AG04450 (cell line): ENCODE measurements at regions of chr4 and their contacts with region 1.

Region 1: DNA sequence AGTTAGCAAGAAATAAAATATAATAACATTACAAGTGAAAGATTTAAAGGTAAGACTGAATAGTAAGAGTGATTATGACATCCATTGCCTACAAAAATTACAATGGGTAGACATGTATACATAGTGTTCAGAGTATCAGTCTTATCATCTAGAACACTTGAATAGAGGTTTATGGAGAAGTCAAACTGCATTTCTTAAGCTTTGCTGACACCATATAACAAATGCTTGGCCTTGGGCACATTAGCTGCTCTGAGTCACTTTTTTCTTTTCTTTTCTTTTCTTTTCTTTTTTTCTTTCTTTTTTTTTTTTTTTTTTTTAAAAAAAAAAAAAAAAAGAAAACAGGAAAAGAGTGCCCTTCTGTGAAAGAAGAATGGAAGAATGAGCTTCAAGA is 220.0 kb downstream of the SPCS3 start:
- DNase-seq: no peak
- H3K4me3 ChIP-seq: no peak overlapping the region
- H3K27ac ChIP-seq: no peak overlapping the region
- H3K27me3 ChIP-seq: no peaks in the 10 kb centered on the region
- CTCF ChIP-seq: no peak

Region 2: DNA sequence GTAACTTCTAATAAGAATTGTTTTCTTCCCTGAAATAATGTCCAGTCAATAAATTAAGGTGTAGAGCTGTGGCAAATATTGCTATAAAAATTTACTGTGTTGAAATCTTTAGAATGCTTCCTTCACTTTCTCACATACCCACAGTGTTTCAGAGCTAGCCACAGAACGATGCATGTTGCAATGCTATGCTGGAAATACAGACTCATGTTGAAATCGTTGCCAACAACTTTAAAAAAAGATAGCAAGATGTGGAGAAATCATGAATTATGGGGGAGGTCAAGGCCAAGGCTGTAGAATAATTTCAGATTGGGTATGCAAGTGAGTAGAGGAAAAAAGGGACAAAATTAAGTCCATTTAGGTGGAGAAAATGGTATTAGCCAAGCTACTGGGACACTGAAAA is 48.1 kb after region 1 on chr4:
- CTCF ChIA-PET with region 1: no interaction called
- POLR2A ChIA-PET with region 1: interaction called, 14 read pairs
- DNase-seq: peak; percentile 23
- H3K4me3 ChIP-seq: no peak overlapping the region
- H3K27ac ChIP-seq: no peak overlapping the region
- H3K27me3 ChIP-seq: no peaks in the 10 kb centered on the region
- CTCF ChIP-seq: no peak